ENCODE measurements at regions of chr22 and their contacts with region 1.

Region 1: GRCh38 chr22:44080936-44081861 is 57.1 kb downstream of the PARVB start:
- DNase-seq: peak; percentile 82 to 85
- H3K4me3 ChIP-seq: no peak overlapping the region
- H3K27ac ChIP-seq: no peak overlapping the region
- H3K4me1 ChIP-seq: peaks cover 15 to 16% of the 10 kb centered on the region in 2 donors
- H3K27me3 ChIP-seq: no peaks in the 10 kb centered on the region
- CTCF ChIP-seq: peak; percentile 71 to 89 (median 77)
- POLR2A ChIP-seq: no peak

Region 2: DNA sequence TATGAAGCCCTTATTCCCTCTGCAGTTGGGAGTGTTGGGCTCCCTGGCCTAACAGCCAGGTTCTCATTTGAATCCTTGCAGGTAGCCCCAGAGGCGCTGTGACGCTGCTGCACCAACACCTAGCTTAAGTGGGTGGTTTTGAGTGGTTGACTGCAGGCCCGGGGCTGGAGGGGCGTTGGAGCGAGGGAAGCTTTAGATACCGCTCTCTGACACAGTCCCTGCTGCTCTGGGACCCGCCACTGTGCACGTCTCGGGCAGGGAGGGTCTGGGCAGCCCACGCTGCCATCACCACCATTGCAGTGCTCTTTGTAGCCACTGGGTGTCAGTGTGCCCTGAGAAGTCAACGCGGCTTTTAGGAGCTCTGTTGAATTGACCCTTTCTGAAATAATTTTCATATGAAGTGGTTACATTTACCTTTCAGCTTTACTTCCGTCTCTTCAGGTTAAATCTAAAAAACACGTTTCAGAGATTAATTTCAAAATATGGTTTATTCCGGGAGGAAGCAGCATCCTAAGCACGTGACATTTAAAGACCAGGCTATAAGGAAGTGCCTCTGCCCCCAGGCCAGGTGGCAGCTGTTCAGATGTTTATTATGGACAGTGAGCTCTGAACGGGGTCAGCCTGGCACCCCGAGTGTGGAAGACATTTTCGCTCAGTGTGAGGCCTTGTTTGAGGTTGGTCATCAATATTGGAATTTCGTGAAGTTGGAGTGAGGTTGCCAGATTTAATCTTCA is 88.0 kb before region 1 on chr22:
- intact Hi-C with region 1: loop called (anchors 5 kb)
- DNase-seq: peak; percentile 49 to 51
- H3K4me3 ChIP-seq: no peak overlapping the region
- H3K27ac ChIP-seq: no peak overlapping the region
- H3K4me1 ChIP-seq: no peaks in the 10 kb centered on the region
- H3K27me3 ChIP-seq: no peaks in the 10 kb centered on the region
- CTCF ChIP-seq: peak; percentile 73 to 95 (median 84)
- POLR2A ChIP-seq: no peak

Region 3: GRCh38 chr22:44020981-44021380 is 60.2 kb before region 1 on chr22:
- intact Hi-C with region 1: no loop called
- DNase-seq: no peak
- H3K4me3 ChIP-seq: no peak overlapping the region
- H3K27ac ChIP-seq: no peak overlapping the region
- H3K4me1 ChIP-seq: peaks cover 4 to 8% of the 10 kb centered on the region in 2 donors
- H3K27me3 ChIP-seq: no peaks in the 10 kb centered on the region
- CTCF ChIP-seq: no peak
- POLR2A ChIP-seq: no peak

Region 4: GRCh38 chr22:44331881-44332714 is 250.9 kb after region 1 on chr22:
- intact Hi-C with region 1: loop called (anchors 5 kb)
- DNase-seq: peak in 1 of 2 donors; percentile 8
- H3K4me3 ChIP-seq: no peak overlapping the region
- H3K27ac ChIP-seq: no peak overlapping the region
- H3K4me1 ChIP-seq: peaks cover 0 to 9% of the 10 kb centered on the region in 2 donors
- H3K27me3 ChIP-seq: peaks cover 14% of the 10 kb centered on the region
- CTCF ChIP-seq: no peak
- POLR2A ChIP-seq: no peak

Region 5: DNA sequence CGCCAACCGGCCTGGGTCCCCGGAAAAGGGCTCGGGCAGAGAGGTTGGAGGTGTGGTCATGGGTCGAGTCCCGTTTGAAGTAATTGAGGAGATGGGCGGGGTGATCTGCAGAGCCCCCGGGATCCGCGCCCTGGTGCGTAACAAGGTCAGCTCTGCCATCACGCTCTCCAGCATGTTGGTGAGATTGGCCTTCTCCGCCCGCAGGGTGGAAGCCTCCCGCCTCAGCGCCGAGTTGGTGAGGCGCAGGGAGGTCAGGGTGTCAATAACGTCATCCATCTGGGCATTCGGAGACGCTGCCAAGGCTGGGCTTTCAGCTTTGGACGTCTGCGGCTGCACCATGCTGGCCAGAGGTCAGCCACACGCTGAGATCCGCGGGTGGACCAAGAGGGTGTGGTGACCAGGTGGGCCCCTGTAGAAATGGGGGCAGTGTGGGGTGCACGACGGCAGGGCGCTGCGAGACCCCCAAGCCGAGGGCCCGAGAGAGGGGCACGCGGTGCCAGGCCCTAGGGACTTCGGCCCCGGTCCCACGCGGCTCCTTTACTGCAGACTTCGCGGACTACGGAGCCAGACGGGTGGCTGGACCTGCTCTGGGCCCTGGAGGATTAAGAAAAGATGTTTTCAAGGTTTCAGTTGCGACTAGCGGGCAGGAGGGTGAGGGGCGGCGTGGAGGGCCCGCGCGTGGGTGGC is 416.2 kb after region 1 on chr22:
- intact Hi-C with region 1: loop called (anchors 10 kb)
- DNase-seq: peak; percentile 14 to 17
- H3K4me3 ChIP-seq: peak overlapping the region; percentile 69 to 98 (median 78)
- H3K27ac ChIP-seq: peak overlapping the region; percentile 45 to 67 (median 52)
- H3K4me1 ChIP-seq: peaks cover 6 to 13% of the 10 kb centered on the region in 2 donors
- H3K27me3 ChIP-seq: no peaks in the 10 kb centered on the region
- CTCF ChIP-seq: no peak
- POLR2A ChIP-seq: no peak

Region 6: DNA sequence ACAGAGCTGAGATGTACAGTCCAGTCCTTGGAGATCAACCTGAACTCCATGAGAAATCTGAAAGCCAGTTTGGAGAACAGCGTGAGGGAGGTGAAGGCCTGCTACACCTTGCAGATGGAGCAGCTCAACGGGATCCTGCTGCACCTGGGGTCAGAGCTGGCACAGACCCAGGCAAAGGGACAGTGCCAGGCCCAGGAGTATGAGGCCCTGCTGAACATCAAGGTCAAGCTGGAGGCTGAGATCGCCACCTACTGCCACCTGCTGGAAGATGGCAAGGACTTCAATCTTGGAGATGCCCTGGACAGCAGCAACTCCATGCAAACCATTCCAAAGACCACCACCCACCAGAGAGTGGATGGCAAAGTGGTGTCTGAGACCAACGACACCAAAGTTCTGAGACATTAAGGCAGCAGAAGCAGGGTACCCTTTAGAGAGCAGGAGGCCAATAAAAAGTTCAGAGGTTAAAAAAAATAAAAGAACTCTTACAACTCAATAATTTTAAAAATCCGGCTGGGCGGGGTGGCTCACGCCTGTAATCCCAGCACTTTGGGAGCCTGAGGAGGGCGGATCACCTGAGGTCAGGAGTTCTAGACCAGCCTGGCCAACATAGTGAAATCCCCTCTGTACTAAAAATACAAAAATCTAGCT is 486.8 kb after region 1 on chr22:
- intact Hi-C with region 1: loop called (anchors 5 kb)
- DNase-seq: peak; percentile 49 to 51
- H3K4me3 ChIP-seq: no peak overlapping the region
- H3K27ac ChIP-seq: no peak overlapping the region
- H3K4me1 ChIP-seq: no peaks in the 10 kb centered on the region
- H3K27me3 ChIP-seq: no peaks in the 10 kb centered on the region
- CTCF ChIP-seq: peak in 5 of 6 experiments; percentile 15 to 52 (median 29)
- POLR2A ChIP-seq: no peak

Region 7: GRCh38 chr22:44625981-44626687 is 544.9 kb after region 1 on chr22:
- intact Hi-C with region 1: loop called (anchors 5 kb)
- DNase-seq: peak; percentile 58 to 66
- H3K4me3 ChIP-seq: no peak overlapping the region
- H3K27ac ChIP-seq: no peak overlapping the region
- H3K4me1 ChIP-seq: peaks cover 0 to 3% of the 10 kb centered on the region in 2 donors
- H3K27me3 ChIP-seq: no peaks in the 10 kb centered on the region
- CTCF ChIP-seq: peak; percentile 98 to 100 (median 99)
- POLR2A ChIP-seq: no peak